Posterior vena cava (tissue), 2 donors: ENCODE measurements at regions of chr3 and their contacts with region 1.

Region 1: DNA sequence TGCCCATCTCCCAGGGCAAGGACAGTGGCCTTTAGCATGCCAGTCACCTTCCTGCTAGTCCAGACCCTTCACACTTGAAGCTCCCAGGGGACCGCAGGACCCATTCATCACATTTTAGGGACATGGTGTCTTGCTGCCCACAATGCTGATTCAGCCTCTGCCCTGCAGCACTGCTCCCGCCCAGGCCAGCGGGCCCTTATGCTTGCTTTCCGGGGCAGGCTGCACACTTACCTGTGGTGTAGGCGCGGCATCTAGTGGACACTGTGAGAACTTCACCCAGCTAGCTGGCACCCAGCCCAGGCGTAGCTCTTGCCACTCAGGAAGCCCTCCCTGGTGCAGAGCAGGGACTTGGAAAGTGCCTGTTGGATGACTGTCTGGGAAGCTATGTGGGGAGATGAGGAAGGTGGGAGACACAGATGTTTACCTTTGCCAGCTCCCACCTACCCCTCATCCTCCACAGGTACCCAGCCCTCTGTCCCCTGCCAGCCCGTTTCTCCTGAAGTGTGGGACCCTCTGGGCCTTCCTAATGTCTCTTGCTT is 26.2 kb upstream of the NR2C2 start:
- DNase-seq: peak; percentile 96

Region 2: GRCh38 chr3:14508961-14509795 is 412.0 kb before region 1 on chr3:
- intact Hi-C with region 1: loop called in 1 of 2 experiments (anchors 1 kb)
- DNase-seq: peak; percentile 89

Region 3: GRCh38 chr3:14672588-14672987 is 248.6 kb before region 1 on chr3:
- intact Hi-C with region 1: loop called in 1 of 2 experiments (anchors 5 kb)
- DNase-seq: no peak

Region 4: GRCh38 chr3:14791343-14791945 is 129.7 kb before region 1 on chr3:
- intact Hi-C with region 1: loop called (anchors 5 to 10 kb)
- DNase-seq: peak; percentile 87

Region 5: GRCh38 chr3:15007681-15008141 is 86.6 kb after region 1 on chr3:
- intact Hi-C with region 1: no loop called
- DNase-seq: no peak